Gastrocnemius medialis (tissue), 4 donors: ENCODE measurements at regions of chr2 and their contacts with region 1.

Region 1: DNA sequence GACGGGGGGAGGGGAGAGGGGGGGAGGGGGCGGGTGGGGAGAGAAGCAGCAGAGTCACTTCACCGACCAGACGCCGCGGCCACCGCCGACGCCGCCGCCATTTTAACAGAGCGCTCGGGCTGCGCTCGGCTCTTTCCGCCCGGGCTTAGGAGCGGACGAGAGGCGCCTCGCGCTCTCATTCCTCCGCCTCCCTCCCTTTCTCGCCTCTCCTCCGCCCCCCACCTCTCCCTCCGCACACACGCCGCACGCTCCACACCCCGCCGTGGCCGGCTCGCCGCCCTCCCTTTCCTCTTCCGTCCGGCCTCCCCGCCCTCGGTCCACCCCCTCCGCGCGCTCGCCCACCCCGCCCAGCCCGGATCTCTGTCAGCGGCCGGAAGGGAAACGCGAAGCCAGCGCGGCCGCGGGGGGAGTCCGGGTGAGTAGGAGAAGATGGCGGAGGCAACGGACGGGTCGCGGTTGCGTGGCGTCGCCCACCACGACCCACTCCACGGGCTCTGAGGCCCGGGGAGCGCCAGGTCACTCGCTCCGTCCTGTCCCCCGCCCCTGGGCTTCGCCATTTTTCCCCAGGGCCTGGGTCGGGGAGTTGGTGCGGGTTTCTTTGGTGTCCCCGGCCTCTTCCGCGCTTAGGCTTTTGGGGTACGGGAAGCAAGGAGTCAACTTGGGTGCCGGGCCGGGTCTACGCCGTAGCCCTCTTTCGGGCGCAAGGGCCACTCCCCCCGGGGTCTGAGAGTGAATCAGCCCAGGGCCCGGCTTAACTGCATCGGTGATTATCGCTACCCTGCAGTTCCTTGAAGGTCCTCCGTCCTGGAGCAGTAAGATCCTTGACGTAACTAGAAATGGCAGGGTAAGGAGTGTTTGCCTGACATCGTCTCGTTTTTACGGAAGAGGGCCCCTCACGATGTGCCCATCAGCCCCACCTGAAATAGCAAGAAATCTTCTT is at the start of gene USP34:
- DNase-seq: peak; percentile 91 to 92
- ATAC-seq: peak; percentile 78 to 81
- H3K4me3 ChIP-seq: peak within 1 kb of the TSS; percentile 78 to 98 (median 86)
- H3K27ac ChIP-seq: peak within 1 kb of the TSS; percentile 95 to 100 (median 98)
- H3K4me1 ChIP-seq: peaks cover 29 to 38% of the 10 kb centered on the region in 2 donors
- H3K27me3 ChIP-seq: no peaks in the 10 kb centered on the region
- CTCF ChIP-seq: peak in 2 of 5 experiments; percentile 12 to 26
- POLR2A ChIP-seq: peak; percentile 86 to 90
- total RNA-seq, gene USP34: 64.5 to 150 (median 76.3) TPM

Region 2: GRCh38 chr2:61288070-61288841 is 183.0 kb before region 1 on chr2:
- in situ Hi-C with region 1: no loop called
- intact Hi-C with region 1: no loop called
- DNase-seq: no peak
- ATAC-seq: no peak
- H3K4me3 ChIP-seq: no peak overlapping the region
- H3K27ac ChIP-seq: no peak overlapping the region
- H3K4me1 ChIP-seq: no peaks in the 10 kb centered on the region
- H3K27me3 ChIP-seq: no peaks in the 10 kb centered on the region
- CTCF ChIP-seq: no peak
- POLR2A ChIP-seq: no peak

Region 3: GRCh38 chr2:61379521-61379920 is 91.7 kb before region 1 on chr2:
- in situ Hi-C with region 1: no loop called
- intact Hi-C with region 1: loop called (anchors 5 kb)
- DNase-seq: no peak
- ATAC-seq: no peak
- H3K4me3 ChIP-seq: no peak overlapping the region
- H3K27ac ChIP-seq: peak overlapping the region in 3 of 4 donors; percentile 71 to 79 (median 77)
- H3K4me1 ChIP-seq: peaks cover 6 to 8% of the 10 kb centered on the region in 2 donors
- H3K27me3 ChIP-seq: no peaks in the 10 kb centered on the region
- CTCF ChIP-seq: no peak
- POLR2A ChIP-seq: no peak

Region 4: GRCh38 chr2:61434314-61434713 is 36.9 kb before region 1 on chr2:
- in situ Hi-C with region 1: no loop called
- intact Hi-C with region 1: loop called (anchors 2 kb)
- DNase-seq: peak; percentile 79 to 97
- ATAC-seq: peak; percentile 72 to 88
- H3K4me3 ChIP-seq: no peak overlapping the region
- H3K27ac ChIP-seq: peak overlapping the region; percentile 83 to 86 (median 85)
- H3K4me1 ChIP-seq: peaks cover 53 to 59% of the 10 kb centered on the region in 2 donors
- H3K27me3 ChIP-seq: no peaks in the 10 kb centered on the region
- CTCF ChIP-seq: no peak
- POLR2A ChIP-seq: no peak

Region 5: GRCh38 chr2:61854474-61855182 is 383.4 kb after region 1 on chr2:
- in situ Hi-C with region 1: no loop called
- intact Hi-C with region 1: loop called (anchors 1 kb)
- DNase-seq: peak; percentile 90 to 93
- ATAC-seq: peak; percentile 97 to 98
- H3K4me3 ChIP-seq: peak overlapping the region; percentile 80 to 89 (median 82)
- H3K27ac ChIP-seq: peak overlapping the region; percentile 89 to 93 (median 90)
- H3K4me1 ChIP-seq: peaks cover 8 to 13% of the 10 kb centered on the region in 2 donors
- H3K27me3 ChIP-seq: no peaks in the 10 kb centered on the region
- CTCF ChIP-seq: no peak
- POLR2A ChIP-seq: no peak

Region 6: DNA sequence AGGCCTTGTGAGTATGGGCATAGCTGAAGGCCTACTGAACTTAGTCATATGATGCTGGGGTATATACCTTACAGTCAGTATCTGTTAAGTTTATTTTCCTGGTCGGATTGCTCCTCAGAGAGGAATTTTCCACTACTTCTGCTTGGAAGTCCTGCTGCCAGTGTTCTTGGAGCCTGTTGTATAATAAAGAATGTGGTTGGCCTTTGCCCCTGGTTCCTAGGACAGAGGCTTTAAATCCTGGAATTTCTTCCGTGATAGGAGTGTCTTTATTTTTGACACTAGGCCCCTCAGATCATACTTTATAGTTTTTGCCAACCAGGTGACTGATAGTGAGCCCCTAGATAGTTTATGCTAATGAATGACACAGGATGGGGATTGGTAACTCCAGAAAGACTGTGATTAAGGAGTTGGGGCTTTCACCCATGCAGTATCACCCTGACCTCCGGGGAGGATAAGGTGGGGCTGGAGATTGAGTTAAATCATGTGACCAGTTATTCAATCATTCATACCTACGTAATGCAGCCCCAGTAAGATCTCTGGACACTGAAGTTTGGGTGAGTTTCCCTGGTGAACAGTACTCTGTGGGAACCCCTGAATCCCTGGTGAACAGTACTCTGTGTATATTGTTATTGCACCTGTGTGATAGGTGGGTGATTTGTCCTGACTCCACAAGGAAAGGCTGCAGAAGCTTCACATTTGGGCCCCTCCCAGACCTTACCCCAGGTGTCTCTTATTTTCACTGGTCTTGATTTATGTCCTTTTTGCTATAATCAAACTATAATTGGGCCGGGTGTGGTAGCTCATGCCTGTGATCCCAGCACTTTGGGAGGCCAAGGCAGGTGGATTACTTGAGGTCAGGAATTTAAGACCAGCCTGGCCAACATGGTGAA is 491.1 kb after region 1 on chr2:
- in situ Hi-C with region 1: no loop called
- intact Hi-C with region 1: no loop called
- DNase-seq: no peak
- ATAC-seq: no peak
- H3K4me3 ChIP-seq: no peak overlapping the region
- H3K27ac ChIP-seq: no peak overlapping the region
- H3K4me1 ChIP-seq: peaks cover 15 to 19% of the 10 kb centered on the region in 2 donors
- H3K27me3 ChIP-seq: no peaks in the 10 kb centered on the region
- CTCF ChIP-seq: no peak
- POLR2A ChIP-seq: no peak